ENCODE measurements at regions of chr9 and their contacts with region 1.

Region 1: GRCh38 chr9:69822091-69822750 is 1.6 kb downstream of the CFAP95 start:
- DNase-seq: no peak
- H3K4me3 ChIP-seq: no peak overlapping the region
- H3K27ac ChIP-seq: no peak overlapping the region
- H3K4me1 ChIP-seq: peaks cover 3% of the 10 kb centered on the region
- H3K27me3 ChIP-seq: peaks cover 71 to 87% of the 10 kb centered on the region in 2 experiments
- CTCF ChIP-seq: no peak
- POLR2A ChIP-seq: no peak

Region 2: GRCh38 chr9:69771775-69772418 is 50.3 kb before region 1 on chr9:
- CTCF ChIA-PET with region 1: no interaction called
- POLR2A ChIA-PET with region 1: no interaction called
- dilution Hi-C with region 1: no loop called
- intact Hi-C with region 1: loop called (anchors 5 kb)
- DNase-seq: no peak
- H3K4me3 ChIP-seq: no peak overlapping the region
- H3K27ac ChIP-seq: no peak overlapping the region
- H3K4me1 ChIP-seq: no peaks in the 10 kb centered on the region
- H3K27me3 ChIP-seq: peaks cover 7 to 10% of the 10 kb centered on the region in 2 experiments
- CTCF ChIP-seq: no peak
- POLR2A ChIP-seq: no peak

Region 3: GRCh38 chr9:70031141-70031545 is 208.9 kb after region 1 on chr9:
- CTCF ChIA-PET with region 1: no interaction called
- POLR2A ChIA-PET with region 1: no interaction called
- dilution Hi-C with region 1: no loop called
- intact Hi-C with region 1: no loop called
- DNase-seq: peak; percentile 32
- H3K4me3 ChIP-seq: no peak overlapping the region
- H3K27ac ChIP-seq: no peak overlapping the region
- H3K4me1 ChIP-seq: no peaks in the 10 kb centered on the region
- H3K27me3 ChIP-seq: no peaks in the 10 kb centered on the region
- CTCF ChIP-seq: no peak
- POLR2A ChIP-seq: no peak

Measured in endothelial cell of umbilical vein (primary cell).